Left ventricle myocardium inferior (tissue), 1 donor: ENCODE measurements at regions of chr1 and their contacts with region 1.

Region 1: GRCh38 chr1:70234733-70235132 is 13.6 kb downstream of the SRSF11 start:
- DNase-seq: no peak
- H3K4me3 ChIP-seq: no peak overlapping the region
- H3K27ac ChIP-seq: no peak overlapping the region
- H3K4me1 ChIP-seq: peaks cover 9% of the 10 kb centered on the region
- H3K27me3 ChIP-seq: no peaks in the 10 kb centered on the region
- CTCF ChIP-seq: no peak

Region 2: GRCh38 chr1:70190180-70190579 is 44.6 kb before region 1 on chr1:
- intact Hi-C with region 1: no loop called
- DNase-seq: no peak
- H3K4me3 ChIP-seq: no peak overlapping the region
- H3K27ac ChIP-seq: no peak overlapping the region
- H3K4me1 ChIP-seq: no peaks in the 10 kb centered on the region
- H3K27me3 ChIP-seq: no peaks in the 10 kb centered on the region
- CTCF ChIP-seq: no peak

Region 3: DNA sequence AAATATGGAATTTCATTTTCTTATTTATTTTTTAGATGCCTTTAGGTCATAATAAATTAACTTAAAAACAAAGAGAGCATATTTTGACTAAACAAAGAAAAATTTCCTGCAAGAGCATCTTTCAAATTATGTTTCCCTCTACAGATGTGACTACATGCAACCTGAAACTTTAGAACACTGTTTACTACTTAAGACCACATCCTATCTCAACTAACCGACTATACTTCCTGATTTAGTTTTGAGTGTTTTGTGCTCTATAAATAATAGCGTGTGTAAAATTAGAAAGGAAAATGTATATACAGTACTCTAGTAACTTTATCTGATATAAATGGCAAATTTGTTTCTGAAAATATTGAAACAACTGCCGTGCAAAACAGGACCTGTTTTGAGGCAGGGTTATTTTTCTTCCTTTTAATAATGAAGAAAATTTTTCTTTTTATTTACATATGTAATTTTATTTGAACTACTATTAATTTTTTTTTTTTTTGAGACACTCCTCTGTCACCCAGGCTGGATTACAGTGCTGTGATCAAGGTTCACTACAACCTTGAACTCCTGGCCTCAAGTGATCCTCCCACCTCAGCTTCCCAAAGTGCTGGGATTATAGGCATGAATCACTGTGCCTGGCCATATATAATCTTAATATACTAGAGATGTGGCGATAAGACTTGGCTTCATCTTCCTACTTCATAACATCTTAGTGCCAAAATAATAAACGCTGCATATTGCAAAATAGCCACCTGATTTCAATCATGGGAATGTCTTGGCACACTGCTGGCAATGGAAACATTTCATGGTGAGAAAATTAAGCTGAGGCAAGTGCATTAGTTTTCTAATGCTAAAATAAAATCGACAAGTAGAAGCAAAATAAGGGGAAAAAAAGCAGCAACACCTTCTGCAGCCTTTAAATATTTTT is 833.9 kb after region 1 on chr1:
- intact Hi-C with region 1: loop called (anchors 10 kb)
- DNase-seq: no peak
- H3K4me3 ChIP-seq: no peak overlapping the region
- H3K27ac ChIP-seq: no peak overlapping the region
- H3K4me1 ChIP-seq: peaks cover 8% of the 10 kb centered on the region
- H3K27me3 ChIP-seq: no peaks in the 10 kb centered on the region
- CTCF ChIP-seq: no peak